Mucosa of descending colon (tissue), 3 donors: ENCODE measurements at regions of chr6 and their contacts with region 1.

Region 1: GRCh38 chr6:116971959-116972358 is 94.9 kb downstream of the RFX6 start:
- DNase-seq: peak in 1 of 3 donors; percentile 44
- ATAC-seq: peak; percentile 66
- H3K4me3 ChIP-seq: no peak overlapping the region
- H3K4me1 ChIP-seq: no peaks in the 10 kb centered on the region
- CTCF ChIP-seq: peak; percentile 50

Region 2: GRCh38 chr6:117188627-117189201 is 216.8 kb after region 1 on chr6:
- intact Hi-C with region 1: loop called in 1 of 2 experiments (anchors 2 kb)
- DNase-seq: no peak
- ATAC-seq: no peak
- H3K4me3 ChIP-seq: no peak overlapping the region
- H3K4me1 ChIP-seq: no peaks in the 10 kb centered on the region
- CTCF ChIP-seq: no peak

Region 3: DNA sequence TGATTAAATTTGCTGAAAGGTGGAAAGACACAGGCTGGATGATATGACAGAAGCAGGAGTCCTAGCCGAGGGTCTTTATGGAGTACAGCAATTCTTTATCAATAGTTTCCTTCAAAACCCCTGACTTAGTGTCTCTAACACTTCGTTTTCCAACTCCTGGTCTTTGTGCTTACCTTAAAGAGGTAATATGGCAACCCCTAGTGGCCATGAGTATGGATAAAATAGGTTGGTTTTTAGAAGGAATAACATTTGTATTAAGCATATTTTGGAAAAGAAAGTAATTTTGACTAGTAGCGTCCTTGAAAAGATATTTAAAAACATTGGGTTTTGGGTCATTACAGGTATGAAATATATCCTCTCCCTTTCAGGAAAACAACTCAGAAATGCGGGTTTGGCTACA is 345.3 kb after region 1 on chr6:
- intact Hi-C with region 1: loop called in 1 of 2 experiments (anchors 5 kb)
- DNase-seq: peak in 1 of 3 donors; percentile 32
- ATAC-seq: no peak
- H3K4me3 ChIP-seq: no peak overlapping the region
- H3K4me1 ChIP-seq: no peaks in the 10 kb centered on the region
- CTCF ChIP-seq: no peak